ENCODE measurements at regions of chr22 and their contacts with region 1.

Region 1: DNA sequence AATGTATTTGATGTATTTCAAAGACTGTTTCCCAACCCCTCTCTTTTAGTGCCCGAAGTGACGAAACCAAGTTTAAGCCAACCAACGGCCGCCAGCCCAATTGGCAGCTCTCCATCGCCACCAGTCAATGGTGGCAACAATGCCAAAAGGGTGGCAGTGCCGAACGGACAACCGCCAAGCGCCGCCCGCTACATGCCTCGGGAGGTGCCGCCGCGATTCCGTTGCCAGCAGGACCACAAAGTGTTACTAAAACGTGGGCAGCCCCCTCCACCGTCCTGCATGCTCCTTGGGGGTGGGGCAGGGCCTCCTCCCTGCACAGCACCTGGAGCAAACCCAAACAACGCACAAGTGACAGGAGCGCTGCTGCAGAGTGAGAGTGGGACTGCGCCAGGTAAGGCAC is 84.1 kb downstream of the TNRC6B start:
- DNase-seq: peak in 1 of 3 donors; percentile 57
- ATAC-seq: no peak
- H3K4me3 ChIP-seq: no peak overlapping the region
- H3K27ac ChIP-seq: no peak overlapping the region
- H3K4me1 ChIP-seq: peaks cover 6% of the 10 kb centered on the region
- H3K27me3 ChIP-seq: no peaks in the 10 kb centered on the region

Region 2: DNA sequence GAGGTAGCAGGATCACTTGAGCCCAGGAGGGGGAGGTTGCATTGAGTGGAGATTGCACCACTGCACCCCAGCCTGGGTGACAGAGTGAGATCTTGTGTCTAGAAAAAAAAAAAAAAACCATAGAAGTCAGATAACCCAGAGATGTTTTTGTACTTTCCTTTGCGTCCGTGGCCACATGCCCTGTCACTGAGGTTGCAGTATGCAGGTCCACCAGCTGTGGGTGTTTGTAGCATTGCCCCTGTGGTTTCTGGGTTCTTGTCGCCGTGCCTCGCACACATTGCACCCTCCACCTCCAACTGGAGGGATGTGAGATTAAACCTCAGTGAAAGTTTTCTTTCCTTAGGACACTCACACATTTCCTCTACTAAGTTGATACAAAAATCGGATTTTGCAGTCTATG is 13.8 kb before region 1 on chr22:
- intact Hi-C with region 1: loop called in 1 of 4 experiments (anchors 1 kb)
- DNase-seq: no peak
- ATAC-seq: no peak
- H3K4me3 ChIP-seq: no peak overlapping the region
- H3K27ac ChIP-seq: no peak overlapping the region
- H3K4me1 ChIP-seq: no peaks in the 10 kb centered on the region
- H3K27me3 ChIP-seq: no peaks in the 10 kb centered on the region

Region 3: DNA sequence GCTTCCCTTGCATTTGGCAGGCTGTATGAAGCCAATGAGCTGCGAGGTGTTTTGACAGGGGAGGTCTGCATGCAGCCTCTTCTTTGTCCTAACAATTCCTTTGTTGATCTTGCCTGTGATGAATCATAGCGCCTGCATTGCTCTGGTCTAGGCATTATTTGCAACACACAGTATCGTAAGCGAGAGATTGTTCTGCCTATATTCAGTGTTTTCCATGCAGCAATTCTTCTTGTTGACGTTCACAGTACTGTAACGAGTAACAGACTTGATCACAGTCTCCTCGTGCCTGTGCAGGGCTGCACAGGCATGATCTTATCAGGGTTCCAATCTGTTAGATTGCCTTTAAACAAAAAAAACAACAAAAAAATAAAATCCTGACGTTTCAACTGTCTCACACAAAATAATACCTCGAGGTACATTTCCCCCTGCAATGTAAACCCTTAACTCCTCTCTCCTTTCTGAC is 70.6 kb after region 1 on chr22:
- intact Hi-C with region 1: no loop called
- DNase-seq: no peak
- ATAC-seq: no peak
- H3K4me3 ChIP-seq: no peak overlapping the region
- H3K27ac ChIP-seq: no peak overlapping the region
- H3K4me1 ChIP-seq: no peaks in the 10 kb centered on the region
- H3K27me3 ChIP-seq: no peaks in the 10 kb centered on the region

Measured in right cardiac atrium (tissue), 5 donors.